ENCODE measurements at regions of chr10 and their contacts with region 1.

Region 1: GRCh38 chr10:69269761-69270160 is 8.5 kb upstream of the HK1 start:
- DNase-seq: no peak
- H3K4me3 ChIP-seq: no peak overlapping the region
- H3K27ac ChIP-seq: no peak overlapping the region
- H3K4me1 ChIP-seq: peaks cover 24% of the 10 kb centered on the region
- H3K27me3 ChIP-seq: peaks cover 3 to 8% of the 10 kb centered on the region in 2 experiments
- CTCF ChIP-seq: no peak
- POLR2A ChIP-seq: no peak

Region 2: GRCh38 chr10:69237528-69238159 is 32.1 kb before region 1 on chr10:
- CTCF ChIA-PET with region 1: no interaction called
- POLR2A ChIA-PET with region 1: no interaction called
- dilution Hi-C with region 1: no loop called
- intact Hi-C with region 1: loop called (anchors 2 kb)
- DNase-seq: peak; percentile 81
- H3K4me3 ChIP-seq: no peak overlapping the region
- H3K27ac ChIP-seq: no peak overlapping the region
- H3K4me1 ChIP-seq: peaks cover 16% of the 10 kb centered on the region
- H3K27me3 ChIP-seq: no peaks in the 10 kb centered on the region
- CTCF ChIP-seq: peak; percentile 81 to 90
- POLR2A ChIP-seq: no peak

Region 3: DNA sequence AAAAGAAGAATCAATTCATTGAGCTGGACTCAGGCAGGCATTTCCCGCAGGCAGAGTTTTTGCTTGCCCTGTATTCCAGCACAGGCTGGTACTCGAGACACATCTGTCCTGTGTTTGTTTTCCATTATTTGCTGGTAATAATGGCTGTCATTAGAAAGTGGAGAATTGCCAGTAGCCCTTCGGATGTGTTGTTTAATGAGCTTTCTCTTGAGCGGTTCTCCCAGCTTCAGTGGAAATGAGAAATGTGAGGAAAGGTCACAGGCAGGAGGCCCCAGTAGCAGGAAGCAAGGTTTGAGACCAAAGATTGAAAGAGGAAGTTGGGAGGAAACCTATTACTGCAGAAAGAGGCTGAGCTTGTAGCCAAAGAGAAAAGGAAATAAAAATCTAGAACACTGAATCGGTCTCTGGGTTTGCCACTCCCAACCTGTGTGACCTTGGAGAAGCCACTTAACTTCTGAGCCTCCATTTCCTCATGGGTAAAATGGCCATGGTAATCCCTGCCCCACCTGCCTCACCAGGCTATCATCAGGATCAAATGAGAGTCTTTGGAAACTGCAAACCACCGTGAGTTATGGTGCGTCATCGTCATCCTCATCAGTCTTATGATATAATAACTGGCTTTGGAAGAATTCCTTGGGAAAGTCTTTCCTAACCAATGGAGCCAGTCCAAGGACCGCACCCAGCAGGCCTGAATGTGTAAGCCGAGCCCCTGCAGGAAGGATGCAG is 79.2 kb after region 1 on chr10:
- CTCF ChIA-PET with region 1: no interaction called
- POLR2A ChIA-PET with region 1: no interaction called
- dilution Hi-C with region 1: no loop called
- intact Hi-C with region 1: no loop called
- DNase-seq: peak; percentile 74
- H3K4me3 ChIP-seq: no peak overlapping the region
- H3K27ac ChIP-seq: peak overlapping the region; percentile 77
- H3K4me1 ChIP-seq: peaks cover 52% of the 10 kb centered on the region
- H3K27me3 ChIP-seq: no peaks in the 10 kb centered on the region
- CTCF ChIP-seq: no peak
- POLR2A ChIP-seq: no peak